ENCODE measurements at regions of chr11 and their contacts with region 1.

Region 1: DNA sequence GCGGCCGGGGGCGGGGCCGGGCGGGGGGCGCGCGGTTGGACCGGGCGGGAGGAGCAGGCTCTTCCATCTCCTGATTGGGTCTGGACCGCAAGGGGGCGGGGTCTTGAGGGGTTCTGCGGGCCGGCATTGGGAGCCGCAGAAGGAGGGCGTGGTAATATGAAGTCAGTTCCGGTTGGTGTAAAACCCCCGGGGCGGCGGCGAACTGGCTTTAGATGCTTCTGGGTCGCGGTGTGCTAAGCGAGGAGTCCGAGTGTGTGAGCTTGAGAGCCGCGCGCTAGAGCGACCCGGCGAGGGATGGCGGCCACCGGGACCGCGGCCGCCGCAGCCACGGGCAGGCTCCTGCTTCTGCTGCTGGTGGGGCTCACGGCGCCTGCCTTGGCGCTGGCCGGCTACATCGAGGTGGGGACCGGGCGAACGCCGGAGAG is at the start of gene APLP2:
- DNase-seq: peak; percentile 90
- ATAC-seq: peak; percentile 92
- H3K4me3 ChIP-seq: peak within 1 kb of the TSS; percentile 71 to 73
- H3K27ac ChIP-seq: peak within 1 kb of the TSS; percentile 90
- H3K4me1 ChIP-seq: peaks cover 18% of the 10 kb centered on the region; the same call in 1 of the 2 replicates
- H3K27me3 ChIP-seq: no peaks in the 10 kb centered on the region
- CTCF ChIP-seq: no peak
- total RNA-seq, gene APLP2: 589 TPM

Region 2: DNA sequence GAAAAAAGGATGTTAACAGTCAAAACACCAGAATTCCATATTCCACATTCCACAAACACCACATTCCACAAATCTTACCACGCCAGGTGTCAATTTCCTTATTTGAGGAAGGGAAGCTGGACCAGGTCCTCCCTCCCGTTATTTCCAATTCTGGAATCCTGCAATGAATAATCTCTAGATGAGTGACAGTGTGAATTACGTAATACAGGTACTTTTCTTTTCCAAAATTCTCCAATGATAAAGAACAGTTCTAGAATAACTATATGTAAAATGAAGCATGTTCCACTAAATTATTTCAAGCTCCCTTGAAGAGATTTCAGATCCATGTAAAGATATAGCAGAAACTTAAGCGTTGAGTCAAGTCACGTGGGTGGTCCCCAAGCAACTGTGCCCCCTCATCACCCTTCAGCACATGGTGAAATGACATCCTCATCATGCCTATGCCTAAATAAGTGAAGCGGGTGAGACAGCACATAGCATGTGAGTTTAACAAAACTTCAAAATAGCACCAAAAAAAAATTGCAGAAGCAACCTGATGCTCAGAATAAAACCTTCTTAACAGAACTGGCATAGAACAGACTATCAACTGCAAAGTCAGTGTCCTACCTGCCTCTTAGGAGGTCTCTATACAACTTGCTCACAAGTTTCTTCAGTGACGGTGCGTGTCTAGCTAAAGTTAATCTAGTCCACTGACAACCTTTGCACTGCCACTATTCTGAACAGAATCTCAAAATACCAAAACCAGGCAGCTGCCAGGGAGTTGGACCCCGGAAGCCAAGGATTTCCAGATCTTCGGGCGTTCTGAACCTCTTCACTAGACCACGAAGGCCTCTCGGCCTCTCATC is 175.2 kb before region 1 on chr11:
- CTCF ChIA-PET with region 1: no interaction called
- POLR2A ChIA-PET with region 1: interaction called, 17 read pairs
- in situ Hi-C with region 1: no loop called
- intact Hi-C with region 1: no loop called
- DNase-seq: no peak
- ATAC-seq: peak; percentile 10
- H3K4me3 ChIP-seq: peak overlapping the region; percentile 81 to 98
- H3K27ac ChIP-seq: peak overlapping the region; percentile 86
- H3K4me1 ChIP-seq: peaks cover 14% of the 10 kb centered on the region
- H3K27me3 ChIP-seq: no peaks in the 10 kb centered on the region
- CTCF ChIP-seq: no peak

Region 3: GRCh38 chr11:129992161-129992944 is 77.3 kb before region 1 on chr11:
- CTCF ChIA-PET with region 1: no interaction called
- POLR2A ChIA-PET with region 1: interaction called, 12 read pairs
- in situ Hi-C with region 1: no loop called
- intact Hi-C with region 1: no loop called
- DNase-seq: no peak
- ATAC-seq: peak; percentile 82
- H3K4me3 ChIP-seq: no peak overlapping the region
- H3K27ac ChIP-seq: peak overlapping the region; percentile 62; the same call in 1 of the 2 replicates
- H3K4me1 ChIP-seq: peaks cover 18% of the 10 kb centered on the region; the same call in 1 of the 2 replicates
- H3K27me3 ChIP-seq: no peaks in the 10 kb centered on the region
- CTCF ChIP-seq: no peak

Region 4: GRCh38 chr11:130055617-130056016 is 14.1 kb before region 1 on chr11:
- CTCF ChIA-PET with region 1: no interaction called
- POLR2A ChIA-PET with region 1: no interaction called
- in situ Hi-C with region 1: no loop called
- intact Hi-C with region 1: no loop called
- DNase-seq: no peak
- ATAC-seq: no peak
- H3K4me3 ChIP-seq: no peak overlapping the region
- H3K27ac ChIP-seq: no peak overlapping the region
- H3K4me1 ChIP-seq: no peaks in the 10 kb centered on the region
- H3K27me3 ChIP-seq: no peaks in the 10 kb centered on the region; the same call in 1 of the 2 replicates
- CTCF ChIP-seq: no peak

Measured in Panc1 (cell line).